ENCODE measurements at regions of chr7 and their contacts with region 1.

Region 1: GRCh38 chr7:116588641-116589594 is 64.1 kb downstream of the CAV1 start:
- DNase-seq: no peak
- ATAC-seq: peak; percentile 25
- H3K4me3 Mint-ChIP-seq: no peak overlapping the region
- H3K27ac Mint-ChIP-seq: no peak overlapping the region
- H3K4me1 Mint-ChIP-seq: peaks cover 23% of the 10 kb centered on the region
- H3K27me3 Mint-ChIP-seq: peaks cover 13% of the 10 kb centered on the region
- CTCF ChIP-seq: no peak

Region 2: GRCh38 chr7:116173051-116174028 is 415.6 kb before region 1 on chr7:
- CTCF ChIA-PET with region 1: interaction called, 28 read pairs
- POLR2A ChIA-PET with region 1: no interaction called
- intact Hi-C with region 1: loop called (anchors 1 kb)
- DNase-seq: no peak
- ATAC-seq: peak; percentile 49
- H3K4me3 Mint-ChIP-seq: no peak overlapping the region
- H3K27ac Mint-ChIP-seq: no peak overlapping the region
- H3K4me1 Mint-ChIP-seq: peaks cover 12% of the 10 kb centered on the region
- H3K27me3 Mint-ChIP-seq: no peaks in the 10 kb centered on the region
- CTCF ChIP-seq: no peak

Region 3: GRCh38 chr7:116258734-116259133 is 330.2 kb before region 1 on chr7:
- CTCF ChIA-PET with region 1: interaction called, 92 read pairs
- POLR2A ChIA-PET with region 1: no interaction called
- intact Hi-C with region 1: loop called (anchors 1 kb)
- DNase-seq: no peak
- ATAC-seq: peak; percentile 60
- H3K4me3 Mint-ChIP-seq: no peak overlapping the region
- H3K27ac Mint-ChIP-seq: no peak overlapping the region
- H3K4me1 Mint-ChIP-seq: peaks cover 12% of the 10 kb centered on the region
- H3K27me3 Mint-ChIP-seq: no peaks in the 10 kb centered on the region
- CTCF ChIP-seq: peak; percentile 63

Region 4: GRCh38 chr7:116548506-116548905 is 40.4 kb before region 1 on chr7:
- CTCF ChIA-PET with region 1: no interaction called
- POLR2A ChIA-PET with region 1: no interaction called
- intact Hi-C with region 1: no loop called
- DNase-seq: no peak
- ATAC-seq: peak; percentile 65
- H3K4me3 Mint-ChIP-seq: no peak overlapping the region
- H3K27ac Mint-ChIP-seq: no peak overlapping the region
- H3K4me1 Mint-ChIP-seq: peaks cover 8% of the 10 kb centered on the region
- H3K27me3 Mint-ChIP-seq: peaks cover under 1% of the 10 kb centered on the region
- CTCF ChIP-seq: no peak

Region 5: GRCh38 chr7:116601426-116601825 is 12.5 kb after region 1 on chr7:
- CTCF ChIA-PET with region 1: interaction called, 12 read pairs
- POLR2A ChIA-PET with region 1: no interaction called
- intact Hi-C with region 1: no loop called
- DNase-seq: no peak
- ATAC-seq: no peak
- H3K4me3 Mint-ChIP-seq: no peak overlapping the region
- H3K27ac Mint-ChIP-seq: no peak overlapping the region
- H3K4me1 Mint-ChIP-seq: peaks cover 2% of the 10 kb centered on the region
- H3K27me3 Mint-ChIP-seq: peaks cover 4% of the 10 kb centered on the region
- CTCF ChIP-seq: no peak

Region 6: GRCh38 chr7:116786791-116787443 is 198.0 kb after region 1 on chr7:
- CTCF ChIA-PET with region 1: interaction called, 79 read pairs
- POLR2A ChIA-PET with region 1: interaction called, 3 read pairs
- intact Hi-C with region 1: loop called (anchors 1 kb)
- DNase-seq: no peak
- ATAC-seq: peak; percentile 97
- H3K4me3 Mint-ChIP-seq: no peak overlapping the region
- H3K27ac Mint-ChIP-seq: no peak overlapping the region
- H3K4me1 Mint-ChIP-seq: no peaks in the 10 kb centered on the region
- H3K27me3 Mint-ChIP-seq: peaks cover 2% of the 10 kb centered on the region
- CTCF ChIP-seq: no peak

Region 7: GRCh38 chr7:117127585-117128168 is 538.8 kb after region 1 on chr7:
- CTCF ChIA-PET with region 1: no interaction called
- POLR2A ChIA-PET with region 1: no interaction called
- intact Hi-C with region 1: loop called (anchors 10 kb)
- DNase-seq: no peak
- ATAC-seq: peak; percentile 40
- H3K4me3 Mint-ChIP-seq: no peak overlapping the region
- H3K27ac Mint-ChIP-seq: no peak overlapping the region
- H3K4me1 Mint-ChIP-seq: no peaks in the 10 kb centered on the region
- H3K27me3 Mint-ChIP-seq: no peaks in the 10 kb centered on the region
- CTCF ChIP-seq: no peak